ENCODE measurements at regions of chr11 and their contacts with region 1.

Region 1: GRCh38 chr11:10808553-10809372 is at the start of gene EIF4G2:
- DNase-seq: peak; percentile 99
- ATAC-seq: peak; percentile 97
- total RNA-seq, gene EIF4G2: 714 TPM

Region 2: GRCh38 chr11:10709299-10710086 is 99.3 kb before region 1 on chr11:
- intact Hi-C with region 1: no loop called
- DNase-seq: no peak
- ATAC-seq: no peak

Region 3: DNA sequence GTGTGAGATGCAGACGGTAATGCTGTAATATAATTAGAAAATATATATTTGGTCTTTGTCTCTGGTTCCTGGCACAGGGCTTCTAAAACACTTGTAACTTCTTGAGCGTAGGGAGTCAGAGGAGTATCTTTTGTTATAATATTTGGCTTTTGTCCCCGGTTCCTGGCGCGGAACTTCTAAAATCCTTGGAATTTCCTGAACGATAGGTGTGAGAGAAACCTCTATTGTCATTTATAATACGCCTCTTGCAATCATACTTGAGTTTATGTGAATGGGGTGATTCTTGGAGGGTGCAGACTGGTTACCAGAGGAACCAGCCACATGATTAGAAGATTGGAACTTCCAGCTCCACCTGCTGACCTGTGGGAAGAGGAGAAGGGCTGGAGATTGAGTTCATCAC is 103.1 kb after region 1 on chr11:
- intact Hi-C with region 1: loop called (anchors 5 kb)
- DNase-seq: no peak
- ATAC-seq: peak; percentile 35